ENCODE measurements at regions of chr3 and their contacts with region 1.

Region 1: GRCh38 chr3:124078953-124079911 is 87.3 kb upstream of the ROPN1 start:
- DNase-seq: no peak

Region 2: GRCh38 chr3:124032648-124033359 is 46.4 kb before region 1 on chr3:
- intact Hi-C with region 1: loop called in 1 of 2 experiments (anchors 5 kb)
- DNase-seq: peak; percentile 94